ENCODE measurements at regions of chr9 and their contacts with region 1.

Region 1: GRCh38 chr9:70340572-70340971 is 73.9 kb downstream of the KLF9 start:
- DNase-seq: no peak
- ATAC-seq: no peak
- H3K4me3 ChIP-seq: no peak overlapping the region
- H3K27ac ChIP-seq: no peak overlapping the region
- H3K4me1 ChIP-seq: no peaks in the 10 kb centered on the region
- H3K27me3 ChIP-seq: no peaks in the 10 kb centered on the region
- CTCF ChIP-seq: peak; percentile 23 to 47 (median 46); a peak in 2 of 6 replicates
- POLR2A ChIP-seq: no peak
- RAD21 ChIP-seq: peak; percentile 68

Region 2: GRCh38 chr9:70510157-70510770 is 169.7 kb after region 1 on chr9:
- CTCF ChIA-PET with region 1: interaction called, 4 read pairs
- POLR2A ChIA-PET with region 1: no interaction called
- RAD21 ChIA-PET with region 1: no interaction called
- intact Hi-C with region 1: loop called (anchors 10 kb)
- DNase-seq: peak; percentile 24
- ATAC-seq: peak; percentile 93
- H3K4me3 ChIP-seq: no peak overlapping the region
- H3K27ac ChIP-seq: no peak overlapping the region
- H3K4me1 ChIP-seq: no peaks in the 10 kb centered on the region
- H3K27me3 ChIP-seq: no peaks in the 10 kb centered on the region
- CTCF ChIP-seq: peak; percentile 52 to 92 (median 92); a peak in 5 of 6 replicates
- POLR2A ChIP-seq: no peak
- RAD21 ChIP-seq: peak; percentile 56

Region 3: DNA sequence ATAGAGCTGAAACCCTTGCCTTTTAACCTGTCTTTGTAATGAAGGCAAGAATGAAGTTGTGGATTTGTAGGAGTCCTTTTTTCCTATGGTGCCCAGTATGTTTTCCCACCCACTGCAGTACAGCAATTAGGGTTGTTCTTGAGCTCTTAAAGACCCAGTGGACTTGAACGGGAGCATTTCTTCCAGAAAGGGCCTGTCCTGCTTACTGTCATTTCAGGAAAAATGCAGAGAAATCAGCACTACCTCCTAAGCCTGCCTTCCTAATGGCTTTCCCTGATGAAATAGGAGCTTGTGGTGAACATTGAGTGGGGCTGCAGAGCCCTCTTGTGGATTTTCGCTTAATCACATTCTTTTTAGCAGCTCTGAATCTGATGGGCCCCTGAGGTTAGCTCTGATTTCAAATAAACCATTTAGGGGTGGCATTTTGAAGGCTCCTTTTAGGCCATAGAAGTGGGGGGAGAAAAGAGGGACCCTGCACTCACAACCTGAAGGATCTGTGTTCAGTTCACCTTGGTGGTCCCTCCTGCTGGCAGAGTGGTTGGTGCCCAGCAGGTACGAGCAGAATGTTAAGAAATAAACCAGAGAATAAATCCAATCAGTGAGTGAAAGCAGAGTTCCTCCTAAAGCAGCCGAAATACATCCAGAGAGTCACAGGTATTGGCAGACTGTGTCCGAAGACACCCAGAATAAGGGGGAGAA is 261.9 kb after region 1 on chr9:
- CTCF ChIA-PET with region 1: interaction called, 33 read pairs
- POLR2A ChIA-PET with region 1: interaction called, 3 read pairs
- RAD21 ChIA-PET with region 1: interaction called in 1 of 2 experiments, 5 read pairs
- intact Hi-C with region 1: loop called (anchors 1 kb)
- DNase-seq: peak; percentile 65
- ATAC-seq: peak; percentile 98
- H3K4me3 ChIP-seq: no peak overlapping the region
- H3K27ac ChIP-seq: no peak overlapping the region
- H3K4me1 ChIP-seq: no peaks in the 10 kb centered on the region
- H3K27me3 ChIP-seq: no peaks in the 10 kb centered on the region
- CTCF ChIP-seq: peak; percentile 62 to 83 (median 73); a peak in 5 of 6 replicates
- POLR2A ChIP-seq: no peak
- RAD21 ChIP-seq: peak; percentile 92

Region 4: DNA sequence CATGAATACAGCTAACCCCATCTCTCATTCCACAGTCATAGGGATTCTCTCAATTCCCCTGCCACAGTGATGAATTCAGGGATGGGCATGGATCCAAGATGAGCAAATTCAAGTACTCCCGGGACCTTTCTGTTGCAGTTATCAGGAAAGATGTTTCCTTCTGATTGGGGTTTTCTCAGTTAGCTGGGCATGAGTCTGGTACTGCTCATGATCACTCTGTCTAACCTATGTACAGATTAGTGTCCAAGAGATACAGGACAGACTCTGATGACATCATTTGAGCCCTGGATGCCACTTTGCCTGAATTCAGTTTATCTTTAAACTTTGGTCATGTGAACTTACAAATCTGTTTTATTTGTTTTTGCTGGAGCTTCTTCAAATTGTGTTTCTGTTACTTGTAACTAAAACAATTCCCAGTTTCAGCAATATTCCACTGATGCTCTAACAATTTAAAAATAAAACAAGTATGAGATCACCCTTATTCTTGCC is 331.6 kb after region 1 on chr9:
- CTCF ChIA-PET with region 1: no interaction called
- POLR2A ChIA-PET with region 1: no interaction called
- RAD21 ChIA-PET with region 1: no interaction called
- intact Hi-C with region 1: no loop called
- DNase-seq: no peak
- ATAC-seq: no peak
- H3K4me3 ChIP-seq: no peak overlapping the region
- H3K27ac ChIP-seq: no peak overlapping the region
- H3K4me1 ChIP-seq: no peaks in the 10 kb centered on the region
- H3K27me3 ChIP-seq: peaks cover 26% of the 10 kb centered on the region; the same call in 1 of the 2 replicates
- CTCF ChIP-seq: no peak
- POLR2A ChIP-seq: no peak
- RAD21 ChIP-seq: no peak